WTC11 (cell line): ENCODE measurements at regions of chr5 and their contacts with region 1.

Region 1: DNA sequence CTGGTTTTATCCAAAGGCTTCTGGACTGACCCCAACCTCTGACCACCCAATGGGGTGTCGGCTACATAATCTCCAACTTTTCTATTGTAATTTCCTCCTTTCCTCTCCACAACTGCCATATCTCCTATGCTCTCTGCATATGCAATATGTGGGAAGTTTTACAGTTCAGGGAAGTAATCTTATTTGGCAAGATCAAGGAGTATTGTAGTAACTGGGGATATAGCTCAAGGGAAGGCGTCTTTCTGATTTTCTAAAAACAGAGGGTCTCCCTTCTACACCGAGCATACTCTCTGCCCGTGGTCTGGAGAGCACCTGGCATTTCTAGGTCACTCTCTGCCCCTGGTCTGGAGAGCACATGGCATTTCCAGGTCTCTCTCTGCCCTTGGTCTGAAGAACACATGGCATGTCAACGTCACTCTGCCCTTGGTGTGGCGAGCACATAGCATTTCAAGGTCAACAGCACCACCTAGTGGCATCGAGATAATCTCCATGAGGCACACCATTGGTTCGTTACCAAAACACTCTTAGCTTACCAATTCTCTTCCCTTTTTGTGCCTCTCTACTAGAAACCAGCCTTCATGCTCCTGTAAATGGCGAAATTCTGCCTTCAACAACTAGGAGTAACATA is 616.4 kb upstream of the NUDT12 start:
- DNase-seq: peak; percentile 69
- ATAC-seq: peak; percentile 95
- H3K4me3 Mint-ChIP-seq: no peak overlapping the region
- H3K27ac Mint-ChIP-seq: no peak overlapping the region
- H3K4me1 Mint-ChIP-seq: no peaks in the 10 kb centered on the region
- H3K27me3 Mint-ChIP-seq: peaks cover 10% of the 10 kb centered on the region
- CTCF ChIP-seq: peak; percentile 86

Region 2: GRCh38 chr5:103808464-103809106 is 370.4 kb before region 1 on chr5:
- CTCF ChIA-PET with region 1: interaction called, 34 read pairs
- POLR2A ChIA-PET with region 1: no interaction called
- DNase-seq: peak; percentile 28
- ATAC-seq: peak; percentile 99
- H3K4me3 Mint-ChIP-seq: no peak overlapping the region
- H3K27ac Mint-ChIP-seq: no peak overlapping the region
- H3K4me1 Mint-ChIP-seq: peaks cover 13% of the 10 kb centered on the region
- H3K27me3 Mint-ChIP-seq: no peaks in the 10 kb centered on the region
- CTCF ChIP-seq: peak; percentile 69

Region 3: DNA sequence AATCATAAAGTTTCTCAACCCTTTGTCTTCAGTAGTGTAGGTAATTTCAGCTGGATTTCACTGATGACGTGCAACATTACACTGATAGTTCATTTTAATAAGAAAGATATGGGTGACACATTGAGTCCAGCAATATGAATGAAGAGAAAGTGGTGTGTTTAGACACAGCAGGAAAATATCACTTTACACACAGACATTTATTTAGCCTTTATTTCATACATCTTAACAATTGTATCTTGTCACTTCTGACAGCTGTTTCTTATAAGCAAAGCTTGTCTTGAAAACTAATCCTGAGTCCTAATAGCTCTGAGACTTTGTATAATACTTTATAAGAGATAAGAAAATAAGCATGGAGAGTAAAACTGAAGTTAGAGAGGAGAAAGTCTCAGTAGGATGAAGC is 104.2 kb after region 1 on chr5:
- CTCF ChIA-PET with region 1: no interaction called
- POLR2A ChIA-PET with region 1: no interaction called
- DNase-seq: no peak
- ATAC-seq: no peak
- H3K4me3 Mint-ChIP-seq: no peak overlapping the region
- H3K27ac Mint-ChIP-seq: no peak overlapping the region
- H3K4me1 Mint-ChIP-seq: no peaks in the 10 kb centered on the region
- H3K27me3 Mint-ChIP-seq: no peaks in the 10 kb centered on the region
- CTCF ChIP-seq: no peak